Ovary (tissue), 10 donors: ENCODE measurements at regions of chr1 and their contacts with region 1.

Region 1: DNA sequence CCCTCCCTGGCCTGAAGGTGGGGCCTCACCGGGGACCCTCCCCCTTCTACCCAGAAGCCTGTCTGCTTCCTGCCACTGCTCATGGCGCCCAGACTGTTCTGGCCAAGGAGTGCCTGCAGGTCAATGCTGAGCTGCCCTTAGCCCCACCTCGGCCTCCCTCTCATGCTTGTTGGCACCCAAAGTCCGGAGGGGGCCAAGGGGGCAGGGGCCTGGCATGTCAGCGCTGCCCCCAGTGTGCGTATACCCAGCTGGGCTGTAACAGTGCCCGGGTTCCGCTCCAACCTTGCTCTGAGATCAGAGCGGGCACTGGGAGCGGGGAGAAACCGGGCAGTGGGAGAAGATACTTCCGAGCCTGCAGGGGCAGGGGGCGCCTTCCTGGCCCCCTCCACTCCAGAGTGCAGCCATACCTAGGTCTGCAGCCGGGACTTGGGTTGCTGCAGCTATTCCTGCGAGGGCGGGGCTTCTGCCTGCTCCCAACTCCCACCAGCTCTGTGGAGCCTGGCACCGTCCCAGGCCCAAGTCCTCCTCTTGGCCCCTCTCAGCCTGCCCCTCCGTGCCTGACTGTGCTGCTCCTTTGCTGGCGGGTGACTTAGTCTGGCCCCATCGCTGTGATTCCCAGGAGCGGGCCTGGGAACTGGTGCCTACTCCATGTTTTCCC is 21.4 kb upstream of the TGFB2 start:
- DNase-seq: peak in 1 of 5 donors; percentile 15
- H3K4me3 ChIP-seq: no peak overlapping the region
- H3K27ac ChIP-seq: no peak overlapping the region
- H3K4me1 ChIP-seq: no peaks in the 10 kb centered on the region
- H3K27me3 ChIP-seq: no peaks in the 10 kb centered on the region
- CTCF ChIP-seq: no peak
- EP300 ChIP-seq: no peak
- POLR2A ChIP-seq: no peak

Region 2: GRCh38 chr1:219066631-219067349 is 743.1 kb after region 1 on chr1:
- intact Hi-C with region 1: loop called in 1 of 4 experiments (anchors 10 kb)
- DNase-seq: no peak
- H3K4me3 ChIP-seq: no peak overlapping the region
- H3K27ac ChIP-seq: no peak overlapping the region
- H3K4me1 ChIP-seq: no peaks in the 10 kb centered on the region
- H3K27me3 ChIP-seq: no peaks in the 10 kb centered on the region
- CTCF ChIP-seq: peak in 2 of 3 donors; percentile 43 to 51
- EP300 ChIP-seq: no peak
- POLR2A ChIP-seq: no peak

Region 3: GRCh38 chr1:219566951-219567947 is 1243.6 kb after region 1 on chr1:
- intact Hi-C with region 1: loop called in 1 of 4 experiments (anchors 10 kb)
- DNase-seq: no peak
- H3K4me3 ChIP-seq: no peak overlapping the region
- H3K27ac ChIP-seq: no peak overlapping the region
- H3K4me1 ChIP-seq: no peaks in the 10 kb centered on the region
- H3K27me3 ChIP-seq: no peaks in the 10 kb centered on the region
- CTCF ChIP-seq: peak in 1 of 3 donors; percentile 36
- EP300 ChIP-seq: no peak
- POLR2A ChIP-seq: no peak

Region 4: GRCh38 chr1:219660666-219661463 is 1337.2 kb after region 1 on chr1:
- intact Hi-C with region 1: loop called in 3 of 4 experiments (anchors 10 kb)
- DNase-seq: peak; percentile 76 to 89 (median 84)
- H3K4me3 ChIP-seq: peak overlapping the region; percentile 21
- H3K27ac ChIP-seq: no peak overlapping the region
- H3K4me1 ChIP-seq: no peaks in the 10 kb centered on the region
- H3K27me3 ChIP-seq: no peaks in the 10 kb centered on the region
- CTCF ChIP-seq: peak in 2 of 3 donors; percentile 40 to 48
- EP300 ChIP-seq: no peak
- POLR2A ChIP-seq: no peak

Region 5: DNA sequence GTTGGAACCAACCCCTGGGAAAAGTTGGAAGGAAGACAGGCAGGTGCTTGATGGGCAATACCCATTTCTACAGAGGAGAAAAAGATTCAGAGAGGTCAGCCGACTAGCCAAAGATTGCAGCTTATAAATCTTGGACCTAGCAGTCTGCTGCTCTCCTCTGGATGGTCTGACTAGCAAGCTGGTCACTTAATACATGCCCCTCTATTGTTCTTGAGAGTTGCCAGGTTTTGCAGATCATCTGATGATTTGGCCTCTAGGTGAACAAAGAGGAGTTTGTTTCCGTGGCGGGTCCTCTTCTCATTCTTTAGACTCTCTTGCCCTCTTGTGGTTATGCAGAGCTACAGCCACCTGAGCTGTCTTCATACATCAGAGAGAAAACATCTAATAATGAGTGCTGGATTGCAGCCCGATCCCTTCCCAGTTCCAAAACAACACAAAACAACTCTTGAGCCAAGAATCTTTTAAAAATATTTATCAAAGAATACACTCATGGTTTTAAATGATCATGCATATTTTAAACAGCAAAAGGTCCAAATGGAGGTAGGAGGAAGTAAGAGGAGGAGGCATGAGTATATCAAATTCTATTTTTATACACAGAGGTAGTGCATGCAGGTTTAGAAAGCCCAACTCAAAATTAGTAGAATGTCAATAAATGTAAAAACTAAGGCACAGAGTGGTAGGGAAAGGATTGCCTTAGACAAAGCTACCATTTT is 1489.0 kb after region 1 on chr1:
- intact Hi-C with region 1: loop called in 1 of 4 experiments (anchors 10 kb)
- DNase-seq: peak in 3 of 5 donors; percentile 19 to 25 (median 23)
- H3K4me3 ChIP-seq: no peak overlapping the region
- H3K27ac ChIP-seq: no peak overlapping the region
- H3K4me1 ChIP-seq: peaks cover 4% of the 10 kb centered on the region
- H3K27me3 ChIP-seq: no peaks in the 10 kb centered on the region
- CTCF ChIP-seq: peak in 1 of 3 donors; percentile 62
- EP300 ChIP-seq: no peak
- POLR2A ChIP-seq: no peak